IMR-90 (cell line): ENCODE measurements at regions of chr6 and their contacts with region 1.

Region 1: DNA sequence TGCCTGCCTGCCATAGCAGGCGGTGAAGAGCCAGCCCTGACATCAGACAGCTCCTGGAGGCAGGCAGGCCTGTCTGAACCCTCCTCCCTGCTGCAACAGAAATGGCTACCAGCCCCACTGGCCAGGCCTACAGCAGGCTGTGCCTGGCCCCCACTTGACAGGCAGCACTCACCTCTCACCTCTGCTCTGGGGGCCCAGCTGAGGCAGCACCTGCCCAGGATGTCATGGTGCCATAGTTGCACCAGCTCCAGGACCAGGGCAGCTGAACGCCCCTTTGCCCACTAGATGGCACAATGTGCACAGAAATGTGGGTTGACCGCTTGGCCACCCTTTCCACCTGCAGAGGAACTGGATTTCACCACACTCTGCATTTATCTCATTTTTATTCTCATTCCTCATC is 30.6 kb downstream of the MRPL14 start:
- DNase-seq: peak; percentile 72
- ATAC-seq: peak; percentile 86
- H3K4me3 ChIP-seq: no peak overlapping the region
- H3K27ac ChIP-seq: no peak overlapping the region
- H3K4me1 ChIP-seq: no peaks in the 10 kb centered on the region
- H3K27me3 ChIP-seq: no peaks in the 10 kb centered on the region
- CTCF ChIP-seq: peak; percentile 93
- POLR2A ChIP-seq: no peak
- RAD21 ChIP-seq: peak; percentile 97

Region 2: GRCh38 chr6:44133003-44133931 is 36.7 kb after region 1 on chr6:
- CTCF ChIA-PET with region 1: no interaction called
- POLR2A ChIA-PET with region 1: no interaction called
- dilution Hi-C with region 1: no loop called
- in situ Hi-C with region 1: no loop called
- intact Hi-C with region 1: loop called (anchors 2 kb)
- DNase-seq: peak; percentile 39
- ATAC-seq: peak; percentile 98
- H3K4me3 ChIP-seq: no peak overlapping the region
- H3K27ac ChIP-seq: peak overlapping the region; percentile 1; the same call in 1 of the 2 replicates
- H3K4me1 ChIP-seq: peaks cover 12% of the 10 kb centered on the region
- H3K27me3 ChIP-seq: no peaks in the 10 kb centered on the region
- CTCF ChIP-seq: peak; percentile 20; the same call in 1 of the 2 replicates
- POLR2A ChIP-seq: no peak
- RAD21 ChIP-seq: peak; percentile 20; the same call in 1 of the 2 replicates

Region 3: DNA sequence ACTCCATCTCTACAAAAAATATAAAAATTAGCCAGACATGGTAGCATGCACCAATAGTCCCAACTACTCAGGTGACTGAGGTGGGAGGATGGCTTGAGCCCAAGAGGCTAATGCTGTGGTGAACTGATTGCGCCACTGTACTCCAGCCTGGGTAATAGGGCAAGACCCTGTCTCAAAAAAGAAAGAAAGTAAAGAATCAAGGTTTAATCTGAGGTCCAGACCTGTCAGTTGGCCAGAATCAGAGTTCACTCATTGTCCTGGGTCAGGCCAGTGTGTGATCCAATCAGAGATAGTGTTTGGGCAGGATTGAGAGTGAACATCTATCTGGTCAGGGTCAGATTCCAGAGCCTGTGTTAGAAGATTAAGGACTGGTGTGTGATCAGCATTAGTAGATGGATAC is 46.2 kb after region 1 on chr6:
- CTCF ChIA-PET with region 1: interaction called, 4 read pairs
- POLR2A ChIA-PET with region 1: no interaction called
- dilution Hi-C with region 1: no loop called
- in situ Hi-C with region 1: loop called (anchors 5 kb)
- intact Hi-C with region 1: no loop called
- DNase-seq: no peak
- ATAC-seq: no peak
- H3K4me3 ChIP-seq: no peak overlapping the region
- H3K27ac ChIP-seq: no peak overlapping the region
- H3K4me1 ChIP-seq: no peaks in the 10 kb centered on the region
- H3K27me3 ChIP-seq: no peaks in the 10 kb centered on the region
- CTCF ChIP-seq: no peak
- POLR2A ChIP-seq: no peak
- RAD21 ChIP-seq: no peak

Region 4: DNA sequence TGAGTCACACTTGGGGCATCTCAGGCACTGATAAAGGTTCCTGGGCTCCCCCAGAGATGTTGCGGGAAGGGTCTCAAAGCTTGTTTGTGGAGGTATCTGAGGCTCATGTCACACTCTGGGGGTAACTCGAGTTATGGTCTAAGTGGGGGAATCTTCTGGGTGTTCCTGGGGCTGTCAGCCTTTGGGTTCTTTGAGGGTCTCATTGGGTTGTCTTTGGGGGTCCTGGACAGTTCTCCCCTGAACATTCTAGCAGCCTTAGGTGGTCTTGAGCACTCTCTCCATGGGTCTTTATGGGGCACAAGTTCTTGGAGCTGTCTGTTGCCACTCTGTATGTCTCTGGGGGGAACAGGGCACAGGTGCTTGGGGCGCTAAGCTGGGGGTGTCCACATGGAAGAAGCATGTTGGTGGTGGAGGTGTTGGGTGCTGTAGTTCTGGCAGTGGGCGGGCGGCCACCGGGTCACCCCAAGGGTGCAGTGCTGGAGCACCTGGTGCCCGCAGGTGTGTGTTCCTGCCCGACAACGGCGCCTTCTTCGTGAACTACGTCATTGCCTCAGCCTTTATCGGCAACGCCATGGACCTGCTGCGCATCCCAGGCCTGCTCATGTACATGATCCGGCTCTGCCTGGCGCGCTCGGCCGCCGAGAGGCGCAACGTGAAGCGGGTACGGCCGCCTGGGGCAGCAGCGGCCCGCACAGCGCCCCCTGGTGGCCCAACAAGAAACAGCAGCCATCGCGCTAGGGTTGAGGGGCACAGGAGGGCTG is 54.9 kb after region 1 on chr6:
- CTCF ChIA-PET with region 1: interaction called, 4 read pairs
- POLR2A ChIA-PET with region 1: no interaction called
- dilution Hi-C with region 1: no loop called
- in situ Hi-C with region 1: no loop called
- intact Hi-C with region 1: loop called (anchors 1 kb)
- DNase-seq: peak; percentile 62
- ATAC-seq: peak; percentile 94
- H3K4me3 ChIP-seq: no peak overlapping the region
- H3K27ac ChIP-seq: no peak overlapping the region
- H3K4me1 ChIP-seq: peaks cover 2% of the 10 kb centered on the region
- H3K27me3 ChIP-seq: no peaks in the 10 kb centered on the region
- CTCF ChIP-seq: peak; percentile 98
- POLR2A ChIP-seq: no peak
- RAD21 ChIP-seq: peak; percentile 84

Region 5: GRCh38 chr6:44237813-44238433 is 141.3 kb after region 1 on chr6:
- CTCF ChIA-PET with region 1: interaction called, 3 read pairs
- POLR2A ChIA-PET with region 1: no interaction called
- dilution Hi-C with region 1: no loop called
- in situ Hi-C with region 1: no loop called
- intact Hi-C with region 1: loop called (anchors 1 kb)
- DNase-seq: peak; percentile 56
- ATAC-seq: peak; percentile 85
- H3K4me3 ChIP-seq: peak overlapping the region; percentile 58
- H3K27ac ChIP-seq: peak overlapping the region; percentile 63
- H3K4me1 ChIP-seq: peaks cover 16% of the 10 kb centered on the region
- H3K27me3 ChIP-seq: no peaks in the 10 kb centered on the region
- CTCF ChIP-seq: peak; percentile 92
- POLR2A ChIP-seq: no peak; the same call in 1 of the 2 replicates
- RAD21 ChIP-seq: peak; percentile 42